Mucosa of descending colon (tissue), 3 donors: ENCODE measurements at regions of chr18 and their contacts with region 1.

Region 1: GRCh38 chr18:35005963-35006577 is 35.1 kb upstream of the MAPRE2 start:
- DNase-seq: peak in 1 of 3 donors; percentile 23
- ATAC-seq: peak; percentile 74
- H3K4me3 ChIP-seq: no peak overlapping the region
- H3K4me1 ChIP-seq: no peaks in the 10 kb centered on the region
- CTCF ChIP-seq: peak; percentile 13

Region 2: GRCh38 chr18:34880882-34881834 is 124.9 kb before region 1 on chr18:
- intact Hi-C with region 1: no loop called
- DNase-seq: no peak
- ATAC-seq: no peak
- H3K4me3 ChIP-seq: no peak overlapping the region
- H3K4me1 ChIP-seq: no peaks in the 10 kb centered on the region
- CTCF ChIP-seq: no peak

Region 3: GRCh38 chr18:34942975-34943374 is 63.1 kb before region 1 on chr18:
- intact Hi-C with region 1: no loop called
- DNase-seq: peak in 1 of 3 donors; percentile 59
- ATAC-seq: peak; percentile 79
- H3K4me3 ChIP-seq: no peak overlapping the region
- H3K4me1 ChIP-seq: peaks cover 7% of the 10 kb centered on the region
- CTCF ChIP-seq: no peak

Region 4: GRCh38 chr18:35143622-35144596 is 137.8 kb after region 1 on chr18:
- intact Hi-C with region 1: loop called (anchors 5 to 10 kb)
- DNase-seq: peak in 2 of 3 donors; percentile 50 to 76
- ATAC-seq: peak; percentile 87
- H3K4me3 ChIP-seq: no peak overlapping the region
- H3K4me1 ChIP-seq: no peaks in the 10 kb centered on the region
- CTCF ChIP-seq: peak; percentile 47

Region 5: GRCh38 chr18:35215026-35215425 is 209.0 kb after region 1 on chr18:
- intact Hi-C with region 1: no loop called
- DNase-seq: no peak
- ATAC-seq: no peak
- H3K4me3 ChIP-seq: no peak overlapping the region
- H3K4me1 ChIP-seq: peaks cover 4% of the 10 kb centered on the region
- CTCF ChIP-seq: no peak